MCF 10A (cell line): ENCODE measurements at regions of chr1 and their contacts with region 1.

Region 1: DNA sequence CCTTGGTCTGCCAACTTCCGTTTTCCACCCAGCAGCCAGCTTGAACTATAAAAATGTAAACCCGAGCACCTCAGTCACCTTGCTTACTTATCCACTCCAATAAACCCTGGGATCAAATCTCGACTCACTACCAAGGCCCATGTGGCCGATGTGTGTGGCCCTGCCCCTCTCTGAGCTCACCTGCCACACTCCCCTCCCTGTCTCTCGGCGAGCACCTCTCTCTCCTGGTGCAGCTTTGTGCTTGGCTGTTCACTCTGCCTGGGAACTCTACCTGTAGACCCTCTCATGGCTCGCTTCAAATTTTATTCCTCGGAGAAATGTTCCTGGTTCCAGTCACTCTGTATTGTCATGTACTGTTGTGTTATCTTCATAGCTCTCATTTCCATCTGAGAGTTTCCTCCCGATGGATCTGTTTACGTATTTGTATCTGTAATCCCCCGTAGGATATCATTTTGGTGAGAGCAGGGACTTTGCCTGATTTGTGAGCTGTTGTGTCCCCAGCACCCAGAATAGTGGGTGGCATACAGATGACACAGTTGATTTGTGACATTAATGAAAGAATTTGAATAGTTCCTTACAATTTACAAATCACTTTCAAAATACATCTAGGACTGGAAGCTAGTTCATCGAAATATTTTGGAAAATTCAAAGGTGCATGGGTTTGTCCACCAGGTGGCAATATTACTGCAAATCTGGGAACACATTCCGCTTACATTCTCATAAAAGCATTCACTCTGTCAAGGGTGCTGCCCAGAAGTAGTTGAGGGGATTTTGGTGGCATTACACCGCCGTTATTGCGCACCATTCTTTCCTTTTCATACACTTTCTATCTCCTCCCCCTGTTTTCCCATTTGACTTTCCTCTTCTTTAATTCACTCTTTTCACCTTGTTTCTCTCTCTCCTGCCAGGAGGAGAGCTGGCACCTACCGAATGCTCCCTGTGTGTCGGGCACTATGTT is 95.3 kb downstream of the ABCA4 start:
- DNase-seq: peak; percentile 77
- H3K4me3 Mint-ChIP-seq: no peak overlapping the region
- H3K27ac Mint-ChIP-seq: peak overlapping the region; percentile 77
- H3K4me1 Mint-ChIP-seq: peaks cover 36% of the 10 kb centered on the region
- H3K27me3 Mint-ChIP-seq: no peaks in the 10 kb centered on the region
- CTCF ChIP-seq: peak; percentile 72

Region 2: DNA sequence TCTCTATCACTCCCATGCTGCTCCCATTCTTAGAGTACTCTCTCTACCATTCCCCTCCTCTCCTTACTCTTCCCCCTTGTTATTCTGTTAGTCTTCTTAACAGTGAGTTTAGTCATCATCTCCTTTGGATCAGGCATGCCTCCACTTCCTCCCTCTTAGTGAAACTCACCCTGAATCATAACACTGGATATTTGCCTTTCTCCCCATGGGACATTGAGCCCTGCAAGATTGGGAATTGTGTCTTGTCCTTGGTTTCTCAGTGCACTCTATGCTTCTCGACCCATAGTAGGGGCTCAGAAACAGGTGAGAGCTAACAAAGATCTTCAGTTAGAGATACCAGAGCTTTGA is 48.1 kb before region 1 on chr1:
- CTCF ChIA-PET with region 1: interaction called, 10 read pairs
- POLR2A ChIA-PET with region 1: no interaction called
- intact Hi-C with region 1: no loop called
- DNase-seq: peak; percentile 18
- H3K4me3 Mint-ChIP-seq: no peak overlapping the region
- H3K27ac Mint-ChIP-seq: no peak overlapping the region
- H3K4me1 Mint-ChIP-seq: no peaks in the 10 kb centered on the region
- H3K27me3 Mint-ChIP-seq: no peaks in the 10 kb centered on the region
- CTCF ChIP-seq: no peak

Region 3: DNA sequence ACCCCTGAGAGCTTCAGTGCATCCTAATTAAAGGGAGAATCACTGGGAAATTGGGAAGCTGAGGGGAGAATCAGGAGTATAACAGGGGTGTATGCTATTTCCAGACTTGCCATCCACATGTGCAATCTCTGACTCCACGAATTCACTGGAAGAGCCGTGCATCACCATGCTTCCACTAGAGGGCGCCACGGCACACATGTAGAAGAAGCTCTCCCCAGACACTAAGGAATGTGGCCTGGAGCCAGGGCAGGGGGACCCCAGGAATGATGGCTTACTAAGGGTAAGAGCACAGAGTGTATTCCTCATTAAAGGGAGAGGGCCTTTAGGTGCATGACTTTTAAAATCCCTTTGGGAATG is 13.8 kb after region 1 on chr1:
- CTCF ChIA-PET with region 1: interaction called, 304 read pairs
- POLR2A ChIA-PET with region 1: interaction called, 10 read pairs
- intact Hi-C with region 1: no loop called
- DNase-seq: peak; percentile 80
- H3K4me3 Mint-ChIP-seq: no peak overlapping the region
- H3K27ac Mint-ChIP-seq: no peak overlapping the region
- H3K4me1 Mint-ChIP-seq: peaks cover 19% of the 10 kb centered on the region
- H3K27me3 Mint-ChIP-seq: no peaks in the 10 kb centered on the region
- CTCF ChIP-seq: peak; percentile 89

Region 4: DNA sequence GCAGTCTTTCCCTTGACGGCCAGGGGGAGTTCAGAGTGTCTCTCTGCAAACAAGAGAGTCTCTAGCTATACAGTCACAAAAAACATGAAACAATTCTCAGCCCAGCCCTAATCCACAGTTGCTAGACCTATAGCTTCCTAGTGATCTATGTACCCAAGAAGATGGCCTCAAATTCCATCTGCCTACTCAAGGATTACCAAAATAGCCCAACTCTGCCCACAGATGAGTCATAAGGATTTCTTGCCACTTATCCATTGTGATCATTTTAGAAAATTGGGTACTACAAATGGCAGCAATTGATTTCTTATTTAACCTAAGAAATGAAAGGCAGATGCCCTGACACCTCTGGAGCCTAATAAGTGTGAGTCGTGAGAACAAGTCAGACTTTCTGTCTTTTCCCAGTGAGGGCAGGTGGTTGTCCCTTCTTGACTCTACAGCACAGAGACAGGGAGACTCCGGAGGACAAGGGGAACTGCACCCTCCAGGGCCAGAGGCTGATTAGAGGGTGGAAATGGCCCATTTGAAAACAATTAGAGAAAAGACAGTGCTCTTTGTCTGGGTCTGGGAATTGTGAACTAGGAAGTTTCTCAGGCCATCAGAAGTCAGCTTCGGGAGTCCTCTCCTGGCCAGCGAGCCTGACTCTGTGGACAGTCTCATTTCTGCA is 29.9 kb after region 1 on chr1:
- CTCF ChIA-PET with region 1: interaction called, 304 read pairs
- POLR2A ChIA-PET with region 1: no interaction called
- intact Hi-C with region 1: no loop called
- DNase-seq: peak; percentile 37
- H3K4me3 Mint-ChIP-seq: no peak overlapping the region
- H3K27ac Mint-ChIP-seq: no peak overlapping the region
- H3K4me1 Mint-ChIP-seq: peaks cover 8% of the 10 kb centered on the region
- H3K27me3 Mint-ChIP-seq: no peaks in the 10 kb centered on the region
- CTCF ChIP-seq: no peak

Region 5: DNA sequence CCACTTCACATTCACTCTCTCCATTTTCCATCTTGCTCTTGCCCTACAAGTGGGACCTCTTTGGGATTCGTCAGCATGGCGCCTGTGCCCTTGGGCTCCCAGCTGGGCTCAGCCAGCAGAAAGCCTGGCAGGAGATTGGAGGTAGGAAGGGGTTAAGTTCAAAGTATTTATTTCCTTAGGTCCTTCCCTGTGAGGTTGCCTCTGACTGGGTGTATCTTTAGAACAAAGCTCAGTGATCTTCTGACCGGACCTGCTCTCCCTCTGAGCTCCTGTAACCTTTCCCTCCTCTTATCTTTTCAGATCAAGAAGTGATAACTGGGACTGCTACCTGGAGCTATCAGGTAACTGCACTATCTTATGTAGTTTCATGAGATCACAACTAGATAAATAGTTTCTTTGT is 316.7 kb after region 1 on chr1:
- CTCF ChIA-PET with region 1: interaction called, 285 read pairs
- POLR2A ChIA-PET with region 1: interaction called, 4 read pairs
- intact Hi-C with region 1: no loop called
- DNase-seq: no peak
- H3K4me3 Mint-ChIP-seq: no peak overlapping the region
- H3K27ac Mint-ChIP-seq: no peak overlapping the region
- H3K4me1 Mint-ChIP-seq: peaks cover 7% of the 10 kb centered on the region
- H3K27me3 Mint-ChIP-seq: peaks cover 24% of the 10 kb centered on the region
- CTCF ChIP-seq: no peak

Region 6: DNA sequence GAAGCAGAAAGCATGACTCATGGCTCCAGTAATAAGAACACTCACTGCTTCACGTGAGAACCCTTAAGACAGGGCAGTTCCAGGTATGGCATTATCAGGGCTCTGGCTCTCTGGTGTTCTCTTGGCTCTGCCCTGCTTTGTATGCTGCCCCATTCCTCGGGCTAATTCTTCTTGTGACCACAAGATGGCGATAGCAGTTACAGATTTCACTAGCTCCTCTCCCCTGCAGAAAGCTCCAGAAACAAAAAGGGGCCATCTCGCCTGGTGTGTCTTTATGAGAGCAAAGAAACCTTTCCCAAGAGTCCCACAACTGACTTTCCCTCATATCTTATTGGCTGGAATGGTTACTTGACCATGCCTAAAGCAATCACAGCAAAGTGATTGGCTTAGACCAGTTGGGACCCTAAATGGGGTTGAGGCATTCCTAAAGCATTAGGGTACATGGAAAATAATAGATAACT is 455.8 kb after region 1 on chr1:
- CTCF ChIA-PET with region 1: no interaction called
- POLR2A ChIA-PET with region 1: no interaction called
- intact Hi-C with region 1: no loop called
- DNase-seq: peak; percentile 78
- H3K4me3 Mint-ChIP-seq: no peak overlapping the region
- H3K27ac Mint-ChIP-seq: no peak overlapping the region
- H3K4me1 Mint-ChIP-seq: no peaks in the 10 kb centered on the region
- H3K27me3 Mint-ChIP-seq: no peaks in the 10 kb centered on the region
- CTCF ChIP-seq: peak; percentile 71